ENCODE measurements at regions of chr2 and their contacts with region 1.

Region 1: DNA sequence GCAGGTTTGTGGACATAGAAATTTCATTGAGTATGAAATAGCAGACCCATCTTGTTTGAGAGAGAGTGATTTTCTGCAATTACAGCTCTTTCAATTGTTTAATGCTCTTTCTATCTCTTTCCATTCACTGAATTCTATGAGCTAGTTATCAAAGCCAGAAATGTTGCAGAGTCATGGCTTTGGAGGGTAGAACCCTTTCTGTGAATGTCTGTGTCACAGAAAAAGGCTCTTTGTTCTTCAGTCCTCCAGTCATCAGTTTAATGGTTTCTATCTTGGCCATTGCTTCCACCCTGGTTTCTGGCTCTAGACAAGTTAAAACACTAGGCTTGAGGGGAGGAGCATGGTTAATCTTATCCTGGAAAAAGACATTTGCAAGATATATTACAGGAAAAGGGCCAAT is 655.0 kb downstream of the STK39 start:
- DNase-seq: no peak
- H3K4me3 ChIP-seq: no peak overlapping the region
- H3K27ac ChIP-seq: peak overlapping the region in 4 of 59 donors; percentile 14 to 27 (median 20)
- H3K27me3 ChIP-seq: no peaks in the 10 kb centered on the region
- CTCF ChIP-seq: no peak

Region 2: DNA sequence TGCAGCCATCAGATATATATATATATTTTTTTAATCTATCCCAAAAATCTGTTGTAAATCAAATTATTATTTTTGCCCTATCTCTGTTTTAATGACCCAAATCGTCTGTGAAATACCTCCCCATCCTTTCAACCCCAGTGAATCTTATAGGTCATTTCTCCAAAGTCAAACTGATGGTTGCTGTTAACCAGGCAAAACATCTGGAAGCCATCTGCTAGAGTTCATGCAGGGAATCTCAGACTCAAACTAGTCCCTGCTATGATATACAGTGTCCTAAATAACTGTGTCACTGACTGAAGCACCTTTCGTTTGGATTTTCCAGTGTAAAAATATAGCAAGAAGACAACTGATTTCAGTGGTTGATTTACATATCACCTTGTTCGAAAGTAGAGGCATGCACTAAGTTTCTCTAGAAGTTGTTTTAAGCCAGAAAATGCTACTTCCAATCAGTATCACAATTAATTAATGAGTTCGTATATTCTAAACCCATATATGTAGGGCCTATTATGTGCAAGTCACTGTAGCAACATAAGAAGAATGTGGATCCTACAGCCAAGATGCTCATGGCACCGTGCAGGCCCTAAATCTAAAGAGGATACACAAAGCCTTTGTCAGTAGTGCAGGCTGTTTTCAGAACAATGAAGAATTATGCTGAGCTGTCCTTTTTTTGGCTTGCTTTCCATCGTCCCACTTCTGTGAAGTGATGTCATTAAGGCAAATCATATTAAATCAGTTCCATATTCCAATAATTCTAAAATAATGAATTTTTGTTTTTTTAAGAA is 89.0 kb after region 1 on chr2:
- intact Hi-C with region 1: loop called in 1 of 2 experiments (anchors 5 kb)
- DNase-seq: peak in 1 of 10 donors; percentile 33
- H3K4me3 ChIP-seq: peak overlapping the region in 4 of 59 donors; percentile 8 to 28 (median 23)
- H3K27ac ChIP-seq: peak overlapping the region in 53 of 59 donors; percentile 0 to 84 (median 63)
- H3K27me3 ChIP-seq: no peaks in the 10 kb centered on the region
- CTCF ChIP-seq: no peak

Region 3: DNA sequence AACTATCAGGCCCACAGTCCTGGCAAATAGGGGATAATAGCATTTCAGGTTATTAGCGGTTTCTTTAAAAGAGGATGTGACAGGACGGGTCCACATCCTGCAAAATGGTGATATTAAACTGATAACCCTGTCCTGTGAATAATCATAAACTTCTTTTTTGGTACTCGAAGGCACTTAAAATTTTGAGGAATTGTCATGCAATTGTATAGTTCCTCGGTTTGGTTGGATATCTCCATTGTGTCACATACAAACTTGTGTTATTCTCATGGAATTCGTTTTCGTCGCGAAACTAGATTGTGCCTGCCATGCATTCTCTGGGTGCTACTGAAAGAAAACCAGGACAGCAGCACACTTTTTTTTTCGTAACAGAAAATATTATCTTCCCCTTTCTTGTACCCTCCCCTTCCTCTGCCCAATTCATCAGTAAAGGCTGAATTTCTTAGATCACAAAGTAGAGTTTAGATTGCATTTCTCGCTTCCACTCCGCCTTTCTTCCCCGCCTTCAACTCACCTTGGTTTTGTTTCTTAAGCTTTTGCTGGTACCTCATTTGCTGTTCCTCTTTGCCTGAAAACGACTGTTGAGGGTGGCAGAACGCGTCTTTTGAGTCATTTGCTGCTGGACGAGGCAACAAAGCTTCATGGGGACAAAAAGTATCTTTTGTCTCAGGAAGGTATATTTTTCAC is 864.9 kb after region 1 on chr2:
- intact Hi-C with region 1: no loop called
- DNase-seq: no peak
- H3K4me3 ChIP-seq: peak overlapping the region; percentile 48 to 99 (median 82)
- H3K27ac ChIP-seq: peak overlapping the region in 39 of 59 donors; percentile 2 to 92 (median 86)
- H3K27me3 ChIP-seq: no peaks in the 10 kb centered on the region
- CTCF ChIP-seq: no peak

Measured in dorsolateral prefrontal cortex (tissue), 120 donors.